Activated naive CD4-positive, alpha-beta T cell treated with anti-CD3 and anti-CD28 coated beads for 36 hours (primary cell): ENCODE measurements at regions of chr22 and their contacts with region 1.

Region 1: GRCh38 chr22:30079952-30080533 is at the start of gene HORMAD2:
- DNase-seq: no peak
- H3K4me3 Mint-ChIP-seq: no peak within 1 kb of the TSS
- H3K27ac Mint-ChIP-seq: no peak within 1 kb of the TSS
- H3K4me1 Mint-ChIP-seq: peaks cover 22% of the 10 kb centered on the region
- H3K27me3 Mint-ChIP-seq: peaks cover 5% of the 10 kb centered on the region
- total RNA-seq, gene HORMAD2: not detected

Region 2: GRCh38 chr22:29901354-29901753 is 178.7 kb before region 1 on chr22:
- CTCF ChIA-PET with region 1: no interaction called
- intact Hi-C with region 1: loop called (anchors 5 kb)
- DNase-seq: no peak
- H3K4me3 Mint-ChIP-seq: no peak overlapping the region
- H3K27ac Mint-ChIP-seq: no peak overlapping the region
- H3K4me1 Mint-ChIP-seq: peaks cover 27% of the 10 kb centered on the region
- H3K27me3 Mint-ChIP-seq: no peaks in the 10 kb centered on the region

Region 3: DNA sequence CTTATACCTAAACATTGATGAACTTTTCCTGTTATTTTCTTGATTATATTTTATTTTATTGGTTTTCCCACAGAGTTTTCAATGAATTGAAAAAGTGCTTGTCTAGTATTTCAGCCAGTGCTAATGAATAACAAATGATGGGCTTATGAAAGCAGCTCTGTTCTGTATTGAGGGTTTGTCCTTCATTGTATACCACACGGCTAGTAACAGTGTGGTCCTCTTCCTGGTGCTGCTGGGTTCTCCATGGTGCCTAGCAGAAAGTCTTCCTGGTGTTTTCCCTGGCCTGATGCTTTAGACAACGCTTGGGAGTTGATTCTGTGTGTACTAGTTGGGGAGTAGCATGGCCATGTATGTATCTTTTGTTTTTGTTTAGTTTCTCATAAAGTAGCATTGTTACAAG is 107.9 kb before region 1 on chr22:
- CTCF ChIA-PET with region 1: no interaction called
- intact Hi-C with region 1: no loop called
- DNase-seq: no peak
- H3K4me3 Mint-ChIP-seq: no peak overlapping the region
- H3K27ac Mint-ChIP-seq: no peak overlapping the region
- H3K4me1 Mint-ChIP-seq: no peaks in the 10 kb centered on the region
- H3K27me3 Mint-ChIP-seq: no peaks in the 10 kb centered on the region